Posterior vena cava (tissue), 2 donors: ENCODE measurements at regions of chr3 and their contacts with region 1.

Region 1: DNA sequence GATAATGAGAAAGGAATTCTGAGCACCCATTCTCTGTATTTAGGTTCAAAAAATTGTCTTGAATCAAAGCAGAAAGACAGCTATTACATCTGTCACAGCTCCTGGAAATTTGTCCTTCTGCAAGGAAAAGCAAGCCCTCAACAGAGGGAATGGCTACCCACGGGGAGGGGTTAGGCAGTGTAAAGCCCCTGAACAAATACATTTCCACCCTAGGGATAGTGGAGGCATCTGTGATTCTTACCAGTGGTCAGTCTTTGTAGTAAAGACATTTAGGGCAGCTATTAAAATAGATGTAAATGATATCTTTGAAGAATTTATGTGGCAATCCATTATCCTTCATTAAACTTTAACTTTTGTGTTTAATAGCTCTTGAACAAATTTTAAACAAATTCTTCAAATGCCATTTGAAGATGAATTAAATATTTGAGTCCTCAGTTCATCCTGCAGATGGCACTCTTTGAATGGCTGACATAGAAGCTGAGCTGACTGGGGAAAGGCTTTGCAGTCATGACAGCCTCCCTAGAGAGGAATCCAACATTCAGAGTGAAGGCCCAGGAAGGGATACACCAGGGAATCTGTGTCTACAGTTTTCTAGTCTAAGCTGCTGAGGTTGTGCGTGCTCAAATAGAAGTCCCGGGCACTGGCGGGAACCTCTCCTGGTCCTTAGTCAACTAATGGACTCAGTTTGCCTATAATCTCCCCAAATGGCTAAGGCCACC is 359.7 kb upstream of the ROPN1 start:
- DNase-seq: no peak

Region 2: DNA sequence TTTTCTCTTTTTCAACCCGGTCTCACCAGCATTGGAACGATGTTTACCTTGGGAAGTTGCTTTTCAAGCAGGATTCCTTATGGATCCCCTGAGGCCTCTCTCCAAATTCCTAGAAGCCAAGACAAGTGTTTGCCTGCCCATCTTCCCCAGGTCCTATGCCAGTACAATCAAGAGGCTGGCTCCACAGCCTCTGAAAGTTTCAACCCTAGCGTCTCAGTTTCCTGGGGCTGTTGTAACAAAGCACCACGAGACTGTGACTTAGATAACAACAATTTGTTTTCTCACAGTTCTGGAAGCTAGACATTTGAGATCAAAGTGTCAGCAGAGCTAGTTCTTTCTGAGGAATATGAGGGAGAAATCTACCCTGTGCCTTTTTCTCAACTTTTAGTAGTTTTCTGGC is 31.5 kb after region 1 on chr3:
- intact Hi-C with region 1: loop called in 1 of 2 experiments (anchors 1 kb)
- DNase-seq: no peak

Region 3: DNA sequence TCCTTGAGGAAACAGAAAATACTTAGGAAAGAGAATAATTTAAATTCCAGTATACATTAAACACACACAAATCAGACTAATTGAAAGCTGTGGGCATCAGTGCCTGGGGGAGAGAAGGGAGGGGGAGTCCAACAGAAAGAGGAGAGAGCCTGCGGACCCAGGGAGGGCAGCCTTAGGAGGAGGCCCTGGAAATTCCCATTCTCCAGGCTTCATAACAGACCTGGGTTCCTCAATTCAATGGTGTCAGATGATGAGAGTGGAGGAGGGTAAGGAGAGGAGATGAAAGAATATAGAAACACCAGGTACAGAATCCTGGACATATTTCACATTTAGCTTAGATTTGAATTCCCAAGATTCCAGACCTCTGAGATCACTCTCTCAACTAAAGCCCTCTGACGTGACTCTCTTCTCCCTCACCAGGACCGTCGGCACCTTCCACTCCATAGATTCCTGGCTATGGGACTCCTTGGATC is 58.2 kb after region 1 on chr3:
- intact Hi-C with region 1: loop called in 1 of 2 experiments (anchors 10 kb)
- DNase-seq: no peak

Region 4: DNA sequence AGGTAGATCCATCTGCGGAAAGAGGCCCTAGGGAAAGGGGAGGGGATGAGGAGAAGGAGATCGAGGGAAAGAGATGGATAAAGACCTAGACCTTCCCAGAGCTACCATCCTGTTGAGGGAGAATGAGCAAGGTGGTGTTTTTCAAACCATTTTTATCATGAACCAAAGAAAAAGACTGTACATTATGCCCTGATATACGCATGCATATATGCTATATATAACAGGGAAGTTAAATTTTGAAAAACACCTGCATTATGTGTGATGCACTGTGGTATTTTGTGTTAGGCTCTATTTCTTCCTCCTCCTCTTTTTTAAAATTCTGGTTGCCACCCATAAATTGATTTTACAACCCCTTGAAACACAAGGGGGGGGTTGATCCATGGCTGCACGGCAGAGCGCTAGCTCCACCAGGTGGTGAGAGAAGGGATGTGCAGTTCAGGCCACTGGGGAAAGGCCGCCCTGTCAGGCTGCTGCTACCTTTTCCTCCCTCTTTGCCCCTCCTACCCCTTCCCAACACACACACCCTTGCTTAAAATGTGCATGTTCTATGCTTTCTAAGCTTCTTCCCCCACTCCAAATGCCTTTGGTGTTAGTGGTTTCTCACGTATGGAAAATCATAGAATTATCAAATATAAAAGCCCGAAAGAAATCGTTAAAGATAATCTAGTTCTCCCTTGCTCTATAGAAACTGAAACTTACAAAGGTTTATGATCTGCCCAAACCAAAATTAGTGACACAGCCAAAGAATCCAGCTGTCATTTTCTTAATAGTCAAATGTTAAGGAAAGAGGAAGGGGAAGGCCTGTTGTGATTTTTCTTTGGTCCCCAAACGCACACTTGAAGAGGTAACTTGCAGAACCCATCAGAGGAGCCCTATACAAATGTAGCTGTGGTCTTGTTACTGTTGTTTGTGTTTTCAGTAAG is 116.7 kb after region 1 on chr3:
- intact Hi-C with region 1: loop called (anchors 5 to 10 kb)
- DNase-seq: no peak